CD4-positive, alpha-beta T cell (primary cell): ENCODE measurements at regions of chr9 and their contacts with region 1.

Region 1: DNA sequence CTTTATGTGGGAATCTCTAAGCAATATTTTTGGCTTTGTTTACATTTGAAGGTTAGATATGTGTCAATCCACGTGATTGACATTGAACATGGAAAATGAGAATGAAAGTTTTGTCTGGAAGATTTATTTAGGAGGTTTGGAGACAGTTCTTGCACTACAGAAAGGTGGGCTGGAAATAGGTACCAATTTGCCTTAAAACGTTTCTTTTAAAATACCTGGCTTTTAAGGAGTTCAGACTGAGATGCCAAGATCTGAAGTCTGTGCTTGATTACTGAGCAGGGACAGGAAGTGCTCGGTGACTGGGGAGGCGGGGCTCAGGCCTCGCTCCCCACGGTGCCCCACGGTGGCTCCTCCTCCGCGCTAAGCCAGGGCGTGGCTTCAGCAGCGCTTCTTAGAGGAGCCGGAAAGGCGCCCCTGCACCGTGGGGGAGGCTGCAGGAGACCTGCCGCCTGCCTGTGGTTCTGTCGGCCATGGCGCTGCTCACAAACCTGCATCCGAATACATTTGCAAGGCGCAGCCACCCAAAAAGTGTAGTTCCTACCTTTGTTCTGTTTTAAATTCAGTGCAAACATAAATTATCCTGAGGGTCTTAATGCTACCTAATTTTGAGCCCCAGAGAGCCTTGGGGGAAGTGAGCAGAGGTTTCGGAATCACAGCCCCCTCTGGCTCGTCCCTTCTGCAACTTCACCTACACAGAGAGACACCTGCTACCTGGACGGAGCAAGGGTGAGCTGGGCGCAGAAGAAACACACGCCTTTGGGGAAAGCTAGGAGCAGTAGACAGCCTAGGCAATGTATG is 49.2 kb downstream of the USP20 start:
- DNase-seq: peak; percentile 93 to 99 (median 97)
- ATAC-seq: peak; percentile 55
- H3K4me3 ChIP-seq: peak overlapping the region; percentile 69
- H3K4me3 Mint-ChIP-seq: peak overlapping the region; percentile 96
- H3K27ac ChIP-seq: peak overlapping the region; percentile 91 to 99
- H3K27ac Mint-ChIP-seq: peak overlapping the region; percentile 99
- H3K4me1 ChIP-seq: peaks cover 72% of the 10 kb centered on the region
- H3K4me1 Mint-ChIP-seq: peaks cover 53% of the 10 kb centered on the region
- H3K27me3 ChIP-seq: no peaks in the 10 kb centered on the region
- H3K27me3 Mint-ChIP-seq: no peaks in the 10 kb centered on the region
- CTCF ChIP-seq: peak; percentile 31

Region 2: GRCh38 chr9:129712634-129713401 is 171.6 kb before region 1 on chr9:
- CTCF ChIA-PET with region 1: no interaction called
- POLR2A ChIA-PET with region 1: no interaction called
- intact Hi-C with region 1: no loop called
- DNase-seq: peak in 1 of 14 experiments; percentile 13
- ATAC-seq: no peak
- H3K4me3 ChIP-seq: no peak overlapping the region
- H3K4me3 Mint-ChIP-seq: no peak overlapping the region
- H3K27ac ChIP-seq: no peak overlapping the region
- H3K27ac Mint-ChIP-seq: no peak overlapping the region
- H3K4me1 ChIP-seq: peaks cover 30% of the 10 kb centered on the region
- H3K4me1 Mint-ChIP-seq: peaks cover 22% of the 10 kb centered on the region
- H3K27me3 ChIP-seq: no peaks in the 10 kb centered on the region
- H3K27me3 Mint-ChIP-seq: peaks cover 11% of the 10 kb centered on the region
- CTCF ChIP-seq: no peak

Region 3: GRCh38 chr9:129835021-129835871 is 49.2 kb before region 1 on chr9 and contains the starts of genes C9orf78 and USP20:
- CTCF ChIA-PET with region 1: interaction called, 4 read pairs
- POLR2A ChIA-PET with region 1: interaction called, 134 read pairs
- intact Hi-C with region 1: loop called (anchors 1 kb)
- DNase-seq: peak; percentile 94 to 100 (median 98)
- ATAC-seq: peak; percentile 89
- H3K4me3 ChIP-seq: peak within 1 kb of the TSS; percentile 95
- H3K4me3 Mint-ChIP-seq: peak within 1 kb of the TSS; percentile 100
- H3K27ac ChIP-seq: peak within 1 kb of the TSS; percentile 92 to 94
- H3K27ac Mint-ChIP-seq: peak within 1 kb of the TSS; percentile 92
- H3K4me1 ChIP-seq: peaks cover 55% of the 10 kb centered on the region
- H3K4me1 Mint-ChIP-seq: peaks cover 66% of the 10 kb centered on the region
- H3K27me3 ChIP-seq: no peaks in the 10 kb centered on the region
- H3K27me3 Mint-ChIP-seq: no peaks in the 10 kb centered on the region
- CTCF ChIP-seq: no peak
- total RNA-seq, gene C9orf78: 145 to 159 TPM
- total RNA-seq, gene USP20: 80.4 to 80.9 TPM

Region 4: GRCh38 chr9:129900263-129901027 is 16.0 kb after region 1 on chr9:
- CTCF ChIA-PET with region 1: interaction called, 19 read pairs
- POLR2A ChIA-PET with region 1: interaction called, 64 read pairs
- intact Hi-C with region 1: loop called in 1 of 2 experiments (anchors 1 kb)
- DNase-seq: peak in 1 of 14 experiments; percentile 37
- ATAC-seq: no peak
- H3K4me3 ChIP-seq: no peak overlapping the region
- H3K4me3 Mint-ChIP-seq: no peak overlapping the region
- H3K27ac ChIP-seq: no peak overlapping the region
- H3K27ac Mint-ChIP-seq: peak overlapping the region; percentile 99
- H3K4me1 ChIP-seq: peaks cover 41% of the 10 kb centered on the region
- H3K4me1 Mint-ChIP-seq: peaks cover 65% of the 10 kb centered on the region
- H3K27me3 ChIP-seq: no peaks in the 10 kb centered on the region
- H3K27me3 Mint-ChIP-seq: no peaks in the 10 kb centered on the region
- CTCF ChIP-seq: no peak

Region 5: DNA sequence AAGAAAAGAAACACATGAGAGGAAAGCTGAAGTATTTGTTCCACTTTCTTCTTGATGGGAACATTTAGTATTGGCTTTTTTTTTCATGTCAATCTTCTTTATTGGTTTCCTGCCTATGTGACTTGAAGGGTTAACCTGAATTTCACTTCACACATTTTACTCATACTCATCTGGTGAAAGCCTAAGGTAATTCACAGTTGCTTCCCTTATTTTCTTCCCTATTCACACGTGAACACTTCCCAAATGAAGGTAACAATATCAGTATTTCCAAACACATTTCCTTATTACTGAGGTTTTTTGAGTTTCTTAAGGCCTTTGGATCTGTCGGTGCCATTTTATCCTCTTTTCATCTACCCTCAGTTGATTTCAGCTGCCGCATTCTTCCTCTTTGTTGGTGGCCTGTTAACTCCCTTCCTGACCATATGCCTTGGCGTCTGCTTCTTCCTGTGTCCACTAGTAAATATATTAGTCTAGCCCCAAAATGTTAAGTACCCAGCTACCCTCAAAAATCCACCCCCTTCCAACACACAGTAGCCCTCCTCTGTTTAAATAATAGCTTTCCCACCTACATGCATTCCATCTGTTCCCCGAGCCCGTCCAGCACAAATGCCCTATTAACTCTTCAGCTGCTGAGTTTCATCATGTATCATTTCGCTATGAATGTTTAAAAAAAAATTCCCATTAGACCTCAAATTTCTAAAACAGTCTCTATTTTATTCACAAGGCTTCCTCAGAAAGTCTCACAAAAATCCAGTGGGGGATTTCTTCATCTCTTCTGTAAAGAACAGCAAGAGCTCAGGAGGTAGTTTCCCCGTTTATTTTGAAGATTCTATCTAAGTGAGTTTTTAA is 48.1 kb after region 1 on chr9:
- CTCF ChIA-PET with region 1: interaction called, 6 read pairs
- POLR2A ChIA-PET with region 1: interaction called, 25 read pairs
- intact Hi-C with region 1: no loop called
- DNase-seq: peak in 2 of 14 experiments; percentile 55 to 57
- ATAC-seq: peak; percentile 35
- H3K4me3 ChIP-seq: no peak overlapping the region
- H3K4me3 Mint-ChIP-seq: peak overlapping the region; percentile 73
- H3K27ac ChIP-seq: peak overlapping the region; percentile 3 to 31
- H3K27ac Mint-ChIP-seq: peak overlapping the region; percentile 85
- H3K4me1 ChIP-seq: peaks cover 45% of the 10 kb centered on the region
- H3K4me1 Mint-ChIP-seq: peaks cover 59% of the 10 kb centered on the region
- H3K27me3 ChIP-seq: no peaks in the 10 kb centered on the region
- H3K27me3 Mint-ChIP-seq: no peaks in the 10 kb centered on the region
- CTCF ChIP-seq: no peak

Region 6: GRCh38 chr9:130029223-130029973 is 145.0 kb after region 1 on chr9:
- CTCF ChIA-PET with region 1: interaction called, 5 read pairs
- POLR2A ChIA-PET with region 1: interaction called, 10 read pairs
- intact Hi-C with region 1: loop called in 1 of 2 experiments (anchors 2 kb)
- DNase-seq: peak in 1 of 14 experiments; percentile 46
- ATAC-seq: no peak
- H3K4me3 ChIP-seq: peak overlapping the region; percentile 3
- H3K4me3 Mint-ChIP-seq: peak overlapping the region; percentile 32
- H3K27ac ChIP-seq: peak overlapping the region; percentile 12 to 78
- H3K27ac Mint-ChIP-seq: peak overlapping the region; percentile 92
- H3K4me1 ChIP-seq: peaks cover 83% of the 10 kb centered on the region
- H3K4me1 Mint-ChIP-seq: peaks cover 93% of the 10 kb centered on the region
- H3K27me3 ChIP-seq: no peaks in the 10 kb centered on the region
- H3K27me3 Mint-ChIP-seq: no peaks in the 10 kb centered on the region
- CTCF ChIP-seq: no peak

Region 7: GRCh38 chr9:130235897-130236668 is 351.7 kb after region 1 on chr9:
- CTCF ChIA-PET with region 1: interaction called, 3 read pairs
- POLR2A ChIA-PET with region 1: no interaction called
- intact Hi-C with region 1: loop called in 1 of 2 experiments (anchors 10 kb)
- DNase-seq: peak; percentile 52 to 82 (median 64)
- ATAC-seq: peak; percentile 40
- H3K4me3 ChIP-seq: no peak overlapping the region
- H3K4me3 Mint-ChIP-seq: peak overlapping the region; percentile 34
- H3K27ac ChIP-seq: no peak overlapping the region
- H3K27ac Mint-ChIP-seq: no peak overlapping the region
- H3K4me1 ChIP-seq: peaks cover 30% of the 10 kb centered on the region
- H3K4me1 Mint-ChIP-seq: peaks cover 22% of the 10 kb centered on the region
- H3K27me3 ChIP-seq: no peaks in the 10 kb centered on the region
- H3K27me3 Mint-ChIP-seq: no peaks in the 10 kb centered on the region
- CTCF ChIP-seq: peak; percentile 98